CD8-positive, alpha-beta T cell (primary cell): ENCODE measurements at regions of chr11 and their contacts with region 1.

Region 1: GRCh38 chr11:61792310-61793085 is at the starts of genes FEN1 and TMEM258:
- DNase-seq: peak; percentile 71 to 94 (median 88)
- ATAC-seq: peak; percentile 87
- H3K4me3 ChIP-seq: peak within 1 kb of the TSS; percentile 64 to 92
- H3K4me3 Mint-ChIP-seq: peak within 1 kb of the TSS; percentile 93
- H3K27ac ChIP-seq: peak within 1 kb of the TSS; percentile 88 to 96
- H3K27ac Mint-ChIP-seq: peak within 1 kb of the TSS; percentile 97
- H3K4me1 ChIP-seq: peaks cover 15% of the 10 kb centered on the region
- H3K4me1 Mint-ChIP-seq: peaks cover 37% of the 10 kb centered on the region
- H3K27me3 ChIP-seq: no peaks in the 10 kb centered on the region
- H3K27me3 Mint-ChIP-seq: no peaks in the 10 kb centered on the region
- CTCF ChIP-seq: no peak
- total RNA-seq, gene FEN1: 12.9 to 15.2 TPM
- total RNA-seq, gene TMEM258: 48.1 to 53.9 TPM

Region 2: DNA sequence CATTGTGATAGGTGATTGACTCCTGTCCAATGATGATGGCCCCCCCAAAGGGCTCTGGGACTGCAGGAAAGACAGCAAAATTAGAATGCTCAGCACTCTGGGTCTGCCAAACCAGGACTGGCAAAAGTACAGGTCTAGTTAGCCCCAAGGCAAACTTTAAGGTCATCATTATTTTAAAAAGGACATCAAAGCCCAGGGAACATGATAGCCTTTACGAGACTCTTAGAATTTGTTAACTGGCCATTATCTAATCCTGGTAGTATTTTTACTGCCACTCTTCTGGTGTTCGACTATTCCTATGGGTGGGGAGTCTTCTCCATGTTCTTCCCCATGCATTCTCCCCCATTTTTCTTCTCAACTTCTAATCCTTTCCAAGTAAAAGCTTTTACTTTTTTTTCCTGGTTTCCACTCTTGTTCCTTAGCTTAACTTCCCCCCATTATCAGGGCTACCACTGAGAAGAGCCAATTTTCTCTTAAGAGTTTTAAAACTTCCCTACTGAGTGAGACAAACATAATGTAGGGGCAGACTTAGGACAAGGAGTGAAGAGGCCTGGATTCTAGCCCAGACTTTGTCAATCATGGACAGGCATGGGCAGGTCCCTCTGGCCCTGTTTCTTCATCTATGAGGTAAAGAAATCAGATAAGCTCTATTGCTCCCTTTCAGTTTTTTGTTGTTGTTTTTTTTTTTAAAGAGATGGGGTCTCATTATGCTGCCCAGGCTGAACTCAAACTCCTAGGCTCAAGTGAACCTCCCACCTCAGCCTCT is 466.7 kb before region 1 on chr11:
- CTCF ChIA-PET with region 1: no interaction called
- POLR2A ChIA-PET with region 1: no interaction called
- intact Hi-C with region 1: no loop called
- DNase-seq: no peak
- ATAC-seq: no peak
- H3K4me3 ChIP-seq: no peak overlapping the region
- H3K4me3 Mint-ChIP-seq: no peak overlapping the region
- H3K27ac ChIP-seq: no peak overlapping the region
- H3K27ac Mint-ChIP-seq: no peak overlapping the region
- H3K4me1 ChIP-seq: peaks cover 3% of the 10 kb centered on the region
- H3K4me1 Mint-ChIP-seq: peaks cover 29% of the 10 kb centered on the region
- H3K27me3 ChIP-seq: no peaks in the 10 kb centered on the region
- H3K27me3 Mint-ChIP-seq: no peaks in the 10 kb centered on the region
- CTCF ChIP-seq: no peak

Region 3: GRCh38 chr11:61567286-61568061 is 225.0 kb before region 1 on chr11:
- CTCF ChIA-PET with region 1: no interaction called
- POLR2A ChIA-PET with region 1: no interaction called
- intact Hi-C with region 1: no loop called
- DNase-seq: peak; percentile 54 to 78 (median 71)
- ATAC-seq: peak; percentile 96
- H3K4me3 ChIP-seq: no peak overlapping the region
- H3K4me3 Mint-ChIP-seq: no peak overlapping the region
- H3K27ac ChIP-seq: no peak overlapping the region
- H3K27ac Mint-ChIP-seq: no peak overlapping the region
- H3K4me1 ChIP-seq: no peaks in the 10 kb centered on the region
- H3K4me1 Mint-ChIP-seq: peaks cover 1% of the 10 kb centered on the region
- H3K27me3 ChIP-seq: peaks cover 2 to 18% of the 10 kb centered on the region in 2 experiments
- H3K27me3 Mint-ChIP-seq: peaks cover 61% of the 10 kb centered on the region
- CTCF ChIP-seq: no peak

Region 4: DNA sequence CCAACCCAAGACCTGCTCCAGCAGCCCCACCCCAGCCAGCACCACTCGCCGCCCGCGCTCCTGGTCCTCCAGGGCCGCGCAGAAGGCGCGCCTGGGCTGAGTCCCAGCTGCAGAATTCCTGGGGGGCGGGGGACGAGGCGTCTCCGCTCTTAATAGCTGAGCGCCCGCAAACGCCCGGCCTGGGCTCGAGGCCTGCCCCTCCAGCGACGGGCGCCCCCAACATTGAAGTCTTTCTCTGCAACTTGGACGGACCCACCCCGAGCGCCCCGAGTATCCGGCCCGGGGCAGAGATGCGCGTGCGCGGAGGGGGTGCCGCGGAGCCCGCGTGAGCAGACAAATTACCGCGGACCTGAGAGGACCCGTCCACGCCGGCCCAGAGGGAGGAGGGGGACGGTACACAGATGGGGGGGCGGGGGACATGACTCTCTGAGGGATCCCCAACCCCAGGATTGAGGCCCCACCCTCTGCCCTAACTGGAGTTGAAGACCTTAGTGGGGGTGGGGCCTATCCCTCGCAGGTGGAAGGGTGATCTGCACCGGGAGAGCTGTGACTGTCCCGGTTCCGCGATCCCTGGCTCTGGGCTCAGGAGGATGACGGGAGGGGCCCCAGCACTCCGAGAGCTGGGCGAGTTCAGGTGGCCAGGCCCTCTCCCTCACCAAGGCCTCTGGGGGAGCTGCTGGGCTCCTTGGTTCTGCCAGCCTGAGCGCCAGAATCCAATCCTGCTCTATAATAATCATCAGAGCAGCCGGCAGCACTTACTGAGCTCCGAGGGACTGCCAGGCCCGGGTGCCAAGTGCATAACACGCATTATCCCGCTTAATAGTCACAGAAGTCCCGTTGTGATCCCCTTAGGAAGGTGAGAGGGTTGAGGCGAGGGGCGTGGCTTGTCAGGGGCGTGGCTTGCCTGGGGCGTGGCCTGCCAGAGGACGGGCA is 204.7 kb before region 1 on chr11:
- CTCF ChIA-PET with region 1: no interaction called
- POLR2A ChIA-PET with region 1: no interaction called
- intact Hi-C with region 1: loop called (anchors 5 to 10 kb)
- DNase-seq: peak; percentile 29 to 77 (median 68)
- ATAC-seq: peak; percentile 75
- H3K4me3 ChIP-seq: peak overlapping the region; percentile 52 to 78
- H3K4me3 Mint-ChIP-seq: peak overlapping the region; percentile 81
- H3K27ac ChIP-seq: no peak overlapping the region
- H3K27ac Mint-ChIP-seq: no peak overlapping the region
- H3K4me1 ChIP-seq: peaks cover 18% of the 10 kb centered on the region
- H3K4me1 Mint-ChIP-seq: peaks cover 17% of the 10 kb centered on the region
- H3K27me3 ChIP-seq: peaks cover 0 to 5% of the 10 kb centered on the region in 2 experiments
- H3K27me3 Mint-ChIP-seq: peaks cover 32% of the 10 kb centered on the region
- CTCF ChIP-seq: no peak

Region 5: DNA sequence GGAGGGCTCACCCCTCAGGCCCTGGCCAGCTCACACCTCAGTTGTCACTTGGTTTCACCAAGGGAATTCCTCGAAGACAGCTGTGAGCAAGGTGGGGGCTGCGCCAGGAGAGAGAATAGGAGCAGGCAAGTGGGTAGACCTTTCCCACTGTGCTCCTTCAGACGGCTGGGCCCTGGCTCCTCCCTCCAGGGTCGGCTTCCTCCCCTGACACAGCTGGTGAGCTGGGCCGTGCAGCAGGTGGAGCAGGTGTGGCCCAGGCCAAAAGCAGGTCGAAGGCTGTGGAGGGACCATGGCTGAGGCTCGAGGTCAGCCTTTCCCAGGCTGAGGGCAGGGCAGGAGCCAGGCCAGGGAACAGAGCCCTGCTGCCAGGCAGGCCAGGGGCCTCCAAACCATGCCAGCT is 52.5 kb before region 1 on chr11:
- CTCF ChIA-PET with region 1: no interaction called
- POLR2A ChIA-PET with region 1: no interaction called
- intact Hi-C with region 1: no loop called
- DNase-seq: no peak
- ATAC-seq: no peak
- H3K4me3 ChIP-seq: no peak overlapping the region
- H3K4me3 Mint-ChIP-seq: no peak overlapping the region
- H3K27ac ChIP-seq: no peak overlapping the region
- H3K27ac Mint-ChIP-seq: no peak overlapping the region
- H3K4me1 ChIP-seq: no peaks in the 10 kb centered on the region
- H3K4me1 Mint-ChIP-seq: no peaks in the 10 kb centered on the region
- H3K27me3 ChIP-seq: no peaks in the 10 kb centered on the region
- H3K27me3 Mint-ChIP-seq: no peaks in the 10 kb centered on the region
- CTCF ChIP-seq: no peak

Region 6: DNA sequence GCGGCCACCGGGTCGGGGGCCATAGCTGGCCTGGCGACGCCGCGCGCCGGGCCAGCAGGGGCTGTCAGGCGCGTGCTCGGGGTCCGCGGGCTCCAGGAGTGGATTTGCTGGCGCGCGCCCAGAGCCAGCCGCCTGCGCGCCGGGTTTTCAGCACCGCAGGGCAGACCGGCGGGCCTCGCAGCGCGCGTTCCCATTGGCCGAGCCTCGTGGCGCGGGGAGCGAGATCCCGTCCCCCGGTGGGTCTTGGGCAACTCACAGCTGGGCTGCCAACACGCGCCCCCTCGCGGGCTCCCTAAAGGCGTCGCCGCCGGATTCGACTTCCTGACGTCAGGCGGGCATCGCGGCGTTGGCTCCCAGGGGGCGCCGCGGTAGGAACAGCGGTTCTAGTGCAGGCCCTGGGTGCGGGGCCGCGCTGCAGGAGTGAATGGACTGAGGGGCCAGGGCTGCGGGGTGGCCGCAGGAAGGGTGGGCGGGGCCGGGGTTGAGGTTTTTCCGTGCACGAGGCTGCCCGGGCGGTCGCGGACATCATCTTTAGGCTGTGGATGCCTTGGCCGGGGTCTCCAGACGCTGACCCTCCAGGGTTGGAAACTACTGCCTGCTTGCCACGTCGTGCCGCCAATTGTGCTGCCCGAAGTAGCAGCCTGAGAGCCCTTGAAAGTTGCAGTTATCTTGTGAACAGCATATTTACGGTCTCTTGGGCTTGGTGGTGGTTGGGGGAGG is 24.4 kb after region 1 on chr11 and contains the start of gene FADS1:
- CTCF ChIA-PET with region 1: interaction called, 68 read pairs
- POLR2A ChIA-PET with region 1: interaction called, 12 read pairs
- intact Hi-C with region 1: loop called (anchors 1 kb)
- DNase-seq: peak; percentile 26 to 87 (median 73)
- ATAC-seq: peak; percentile 60
- H3K4me3 ChIP-seq: peak within 1 kb of the TSS; percentile 57 to 73
- H3K4me3 Mint-ChIP-seq: peak within 1 kb of the TSS; percentile 94
- H3K27ac ChIP-seq: peak within 1 kb of the TSS; percentile 10 to 27
- H3K27ac Mint-ChIP-seq: peak within 1 kb of the TSS; percentile 71
- H3K4me1 ChIP-seq: peaks cover 12% of the 10 kb centered on the region
- H3K4me1 Mint-ChIP-seq: peaks cover 17% of the 10 kb centered on the region
- H3K27me3 ChIP-seq: peaks cover 0 to 3% of the 10 kb centered on the region in 2 experiments
- H3K27me3 Mint-ChIP-seq: no peaks in the 10 kb centered on the region
- CTCF ChIP-seq: no peak
- total RNA-seq, gene FADS1: 3.1 TPM

Region 7: DNA sequence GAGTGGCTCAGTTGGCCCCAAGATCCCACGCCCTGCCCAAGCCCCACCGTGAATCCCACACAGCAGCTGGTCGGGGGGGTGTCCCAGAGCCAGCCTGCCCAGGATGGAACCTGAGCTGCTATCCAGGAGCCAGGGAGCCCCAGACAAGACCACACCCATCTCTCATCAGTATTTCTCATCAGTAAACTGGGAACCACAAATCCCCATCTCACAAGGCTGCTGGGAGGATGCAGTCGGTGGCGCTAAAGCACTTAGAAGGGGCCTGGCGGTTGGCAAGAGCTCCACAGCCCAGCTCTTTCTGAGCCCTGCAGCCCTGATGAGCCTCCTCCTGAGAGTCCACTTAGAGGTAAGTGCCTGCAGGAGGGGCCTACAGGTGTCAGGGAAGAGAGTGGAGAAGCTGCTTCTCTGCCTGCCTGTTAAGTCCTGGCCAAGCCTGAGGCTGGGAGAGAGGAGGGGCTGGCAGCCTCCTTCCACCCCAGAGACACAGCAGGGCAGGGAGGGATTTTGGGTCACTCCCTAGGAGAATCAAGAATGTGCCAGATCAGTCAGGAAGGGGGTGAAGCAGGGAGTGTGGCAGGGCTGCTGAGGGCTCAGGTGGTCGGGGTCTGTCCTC is 92.8 kb after region 1 on chr11:
- CTCF ChIA-PET with region 1: interaction called, 13 read pairs
- POLR2A ChIA-PET with region 1: no interaction called
- intact Hi-C with region 1: no loop called
- DNase-seq: no peak
- ATAC-seq: no peak
- H3K4me3 ChIP-seq: no peak overlapping the region
- H3K4me3 Mint-ChIP-seq: no peak overlapping the region
- H3K27ac ChIP-seq: no peak overlapping the region
- H3K27ac Mint-ChIP-seq: no peak overlapping the region
- H3K4me1 ChIP-seq: peaks cover 4% of the 10 kb centered on the region
- H3K4me1 Mint-ChIP-seq: no peaks in the 10 kb centered on the region
- H3K27me3 ChIP-seq: no peaks in the 10 kb centered on the region
- H3K27me3 Mint-ChIP-seq: peaks cover 2% of the 10 kb centered on the region
- CTCF ChIP-seq: no peak

Region 8: GRCh38 chr11:61967116-61967923 is 174.8 kb after region 1 on chr11 and contains the start of gene FTH1:
- CTCF ChIA-PET with region 1: interaction called, 6 read pairs
- POLR2A ChIA-PET with region 1: interaction called, 11 read pairs
- intact Hi-C with region 1: loop called (anchors 5 kb)
- DNase-seq: peak; percentile 82 to 95 (median 91)
- ATAC-seq: peak; percentile 74
- H3K4me3 ChIP-seq: peak within 1 kb of the TSS; percentile 98 to 100
- H3K4me3 Mint-ChIP-seq: peak within 1 kb of the TSS; percentile 96
- H3K27ac ChIP-seq: peak within 1 kb of the TSS; percentile 72 to 96
- H3K27ac Mint-ChIP-seq: peak within 1 kb of the TSS; percentile 98
- H3K4me1 ChIP-seq: peaks cover 43% of the 10 kb centered on the region
- H3K4me1 Mint-ChIP-seq: peaks cover 59% of the 10 kb centered on the region
- H3K27me3 ChIP-seq: no peaks in the 10 kb centered on the region
- H3K27me3 Mint-ChIP-seq: no peaks in the 10 kb centered on the region
- CTCF ChIP-seq: no peak
- total RNA-seq, gene FTH1: 2,788 to 2,859 TPM

Region 9: DNA sequence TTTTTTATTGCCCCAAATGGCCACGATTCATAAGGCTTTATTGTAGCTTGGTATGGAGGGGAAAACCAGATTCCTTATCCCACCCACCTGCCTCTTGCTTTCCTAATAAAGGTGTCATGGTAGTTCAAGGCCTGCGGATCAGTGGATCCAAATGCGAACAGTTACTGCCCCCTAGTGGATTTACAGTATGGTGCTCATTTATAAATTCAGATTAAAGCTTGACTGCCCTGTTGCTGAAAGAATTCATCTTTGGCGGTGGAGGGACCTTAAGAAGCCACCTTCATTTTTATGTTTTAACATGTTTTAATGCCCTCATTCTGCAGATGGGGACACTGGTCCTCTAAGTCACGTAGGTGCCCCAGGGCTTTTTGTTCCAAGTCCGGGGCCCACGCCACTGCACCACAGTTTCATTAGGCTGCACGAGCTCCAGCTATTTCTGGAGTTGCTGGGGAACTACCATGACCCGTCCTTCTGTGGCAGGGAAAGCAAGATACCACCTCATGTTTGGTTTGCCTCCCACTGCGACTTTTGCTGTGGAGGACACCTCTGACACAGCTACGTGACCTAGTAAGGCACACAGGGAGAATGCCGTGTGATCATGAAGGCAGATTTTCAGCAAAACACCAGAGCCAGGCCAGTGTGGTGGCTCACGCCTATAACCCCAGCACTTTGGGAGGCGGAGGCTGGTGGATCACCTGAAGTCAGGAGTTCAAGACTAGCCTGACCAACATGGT is 315.7 kb after region 1 on chr11:
- CTCF ChIA-PET with region 1: interaction called, 99 read pairs
- POLR2A ChIA-PET with region 1: interaction called, 3 read pairs
- intact Hi-C with region 1: loop called (anchors 1 kb)
- DNase-seq: peak in 7 of 9 experiments; percentile 8 to 80 (median 45)
- ATAC-seq: peak; percentile 65
- H3K4me3 ChIP-seq: no peak overlapping the region
- H3K4me3 Mint-ChIP-seq: no peak overlapping the region
- H3K27ac ChIP-seq: no peak overlapping the region
- H3K27ac Mint-ChIP-seq: no peak overlapping the region
- H3K4me1 ChIP-seq: peaks cover 19% of the 10 kb centered on the region
- H3K4me1 Mint-ChIP-seq: peaks cover 19% of the 10 kb centered on the region
- H3K27me3 ChIP-seq: no peaks in the 10 kb centered on the region
- H3K27me3 Mint-ChIP-seq: no peaks in the 10 kb centered on the region
- CTCF ChIP-seq: peak; percentile 70

Region 10: DNA sequence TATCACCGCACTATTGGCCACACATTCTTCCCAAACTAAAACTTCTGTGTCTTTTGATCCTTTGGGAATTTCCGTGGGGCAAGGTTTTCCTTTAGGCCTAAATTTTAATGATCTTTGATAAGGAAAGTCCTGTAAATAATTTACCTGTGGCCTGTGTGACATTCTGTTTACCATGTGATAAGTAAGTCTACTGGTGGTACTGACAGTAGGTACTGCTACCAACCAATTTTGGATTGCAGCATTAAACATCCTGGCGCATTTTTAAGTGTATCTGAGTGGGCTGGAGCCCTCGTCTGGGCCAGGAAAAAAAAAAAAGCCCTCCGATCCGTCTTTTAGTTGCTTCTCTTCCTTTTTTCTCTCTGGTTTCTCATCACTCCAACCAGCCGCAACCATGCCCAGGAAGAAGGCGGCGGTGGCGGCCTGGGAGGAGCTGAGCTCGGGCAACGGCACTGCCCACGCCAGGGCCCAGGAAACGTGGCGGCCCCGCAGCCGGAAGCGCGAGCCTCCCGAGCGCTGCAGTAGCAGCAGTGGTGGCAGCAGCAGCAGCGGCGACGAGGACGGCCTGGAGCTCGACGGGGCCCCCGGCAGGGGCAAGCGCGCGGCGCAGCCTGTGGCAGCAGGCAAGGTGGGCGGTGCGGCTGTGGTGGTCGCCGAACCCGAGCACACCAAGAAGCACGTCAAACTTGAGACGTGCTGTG is 578.4 kb after region 1 on chr11:
- CTCF ChIA-PET with region 1: no interaction called
- POLR2A ChIA-PET with region 1: no interaction called
- intact Hi-C with region 1: loop called in 1 of 2 experiments (anchors 5 kb)
- DNase-seq: peak; percentile 12 to 76 (median 38)
- ATAC-seq: peak; percentile 87
- H3K4me3 ChIP-seq: no peak overlapping the region
- H3K4me3 Mint-ChIP-seq: peak overlapping the region; percentile 68
- H3K27ac ChIP-seq: peak overlapping the region in 1 of 2 experiments; percentile 69
- H3K27ac Mint-ChIP-seq: peak overlapping the region; percentile 86
- H3K4me1 ChIP-seq: no peaks in the 10 kb centered on the region
- H3K4me1 Mint-ChIP-seq: peaks cover 16% of the 10 kb centered on the region
- H3K27me3 ChIP-seq: no peaks in the 10 kb centered on the region
- H3K27me3 Mint-ChIP-seq: no peaks in the 10 kb centered on the region
- CTCF ChIP-seq: no peak